ENCODE measurements at regions of chr17 and their contacts with region 1.

Region 1: DNA sequence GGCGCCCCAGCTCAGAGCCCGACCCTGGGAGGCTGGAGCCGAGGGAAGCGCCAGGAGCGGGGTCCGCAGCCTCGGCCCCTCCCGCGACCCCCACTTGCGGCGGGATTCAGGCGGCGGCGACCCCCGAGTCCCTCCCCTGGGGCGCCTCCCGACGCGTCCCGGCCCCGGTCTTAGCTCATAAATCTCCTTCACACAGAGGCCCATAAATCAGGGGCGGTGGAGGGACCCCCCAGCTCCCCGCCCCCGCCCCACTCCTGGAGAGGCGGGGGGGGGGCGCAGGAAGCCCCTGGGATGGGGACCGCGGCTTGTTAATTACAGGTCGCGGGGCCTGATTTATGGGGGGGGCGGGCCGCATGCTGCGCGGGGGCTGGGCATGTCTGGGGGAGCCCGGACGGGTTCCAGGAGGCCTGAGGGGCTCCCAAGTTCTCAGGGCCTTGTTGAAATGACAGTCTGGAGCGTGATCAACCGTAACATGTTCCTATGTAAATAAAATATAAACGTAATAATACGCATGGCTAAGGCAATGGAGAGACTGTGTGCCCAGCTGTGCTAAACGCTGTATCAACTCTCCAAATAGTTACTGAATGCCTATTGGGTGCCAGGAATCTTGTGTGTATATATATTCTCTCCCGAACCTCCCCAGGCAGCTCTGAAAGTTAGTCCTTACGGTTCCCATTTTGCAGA is 10.0 kb upstream of the BHLHA9 start:
- DNase-seq: no peak
- ATAC-seq: no peak; the same call in 1 of the 2 replicates
- H3K4me3 Mint-ChIP-seq: peak overlapping the region; percentile 86
- H3K27ac Mint-ChIP-seq: no peak overlapping the region
- H3K4me1 Mint-ChIP-seq: peaks cover 12% of the 10 kb centered on the region
- H3K27me3 Mint-ChIP-seq: peaks cover 41% of the 10 kb centered on the region
- CTCF ChIP-seq: no peak

Region 2: DNA sequence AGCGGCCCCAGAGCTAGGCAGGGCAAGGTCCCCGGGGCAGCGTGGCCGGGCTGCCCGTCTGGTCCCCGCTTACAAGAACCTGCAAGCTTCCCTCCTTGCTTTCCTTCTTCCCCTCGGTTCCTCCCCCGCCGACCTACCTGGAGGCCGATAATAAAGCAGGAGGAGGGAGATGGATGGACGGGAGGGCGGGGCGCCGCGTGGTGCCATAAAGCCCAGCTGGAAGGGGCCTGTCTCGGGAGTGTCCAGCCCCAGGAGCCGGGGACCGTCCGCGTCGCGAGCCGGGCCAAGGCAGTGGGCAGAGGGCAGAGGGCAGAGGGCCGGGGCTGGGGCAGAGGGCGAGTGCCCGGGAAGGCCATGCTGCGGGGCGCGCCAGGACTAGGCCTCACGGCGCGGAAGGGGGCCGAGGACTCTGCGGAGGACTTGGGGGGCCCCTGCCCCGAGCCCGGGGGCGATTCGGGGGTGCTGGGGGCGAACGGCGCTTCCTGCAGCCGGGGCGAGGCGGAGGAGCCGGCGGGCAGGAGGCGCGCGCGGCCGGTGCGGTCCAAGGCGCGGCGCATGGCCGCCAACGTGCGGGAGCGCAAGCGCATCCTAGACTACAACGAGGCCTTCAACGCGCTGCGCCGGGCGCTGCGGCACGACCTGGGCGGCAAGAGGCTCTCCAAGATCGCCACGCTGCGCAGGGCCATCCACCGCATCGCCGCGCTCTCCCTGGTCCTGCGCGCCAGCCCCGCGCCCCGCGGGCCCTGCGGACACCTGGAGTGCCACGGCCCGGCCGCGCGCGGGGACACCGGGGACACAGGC is 10.2 kb after region 1 on chr17 and contains the start of gene BHLHA9:
- CTCF ChIA-PET with region 1: interaction called, 13 read pairs
- POLR2A ChIA-PET with region 1: no interaction called
- DNase-seq: peak; percentile 38
- ATAC-seq: peak; percentile 7
- H3K4me3 Mint-ChIP-seq: peak within 1 kb of the TSS; percentile 95
- H3K27ac Mint-ChIP-seq: no peak within 1 kb of the TSS
- H3K4me1 Mint-ChIP-seq: peaks cover 7% of the 10 kb centered on the region
- H3K27me3 Mint-ChIP-seq: peaks cover 7% of the 10 kb centered on the region
- CTCF ChIP-seq: no peak
- total RNA-seq, gene BHLHA9: 0.44 to 0.76 TPM in 2 of 3 replicates, not detected in the other

Region 3: GRCh38 chr17:1323336-1323735 is 63.1 kb after region 1 on chr17:
- CTCF ChIA-PET with region 1: no interaction called
- POLR2A ChIA-PET with region 1: no interaction called
- DNase-seq: peak; percentile 35
- ATAC-seq: no peak
- H3K4me3 Mint-ChIP-seq: no peak overlapping the region
- H3K27ac Mint-ChIP-seq: no peak overlapping the region
- H3K4me1 Mint-ChIP-seq: no peaks in the 10 kb centered on the region
- H3K27me3 Mint-ChIP-seq: peaks cover 4% of the 10 kb centered on the region; the same call in 1 of the 2 replicates
- CTCF ChIP-seq: no peak

Measured in WTC11 (cell line).